ENCODE measurements at regions of chr17 and their contacts with region 1.

Region 1: DNA sequence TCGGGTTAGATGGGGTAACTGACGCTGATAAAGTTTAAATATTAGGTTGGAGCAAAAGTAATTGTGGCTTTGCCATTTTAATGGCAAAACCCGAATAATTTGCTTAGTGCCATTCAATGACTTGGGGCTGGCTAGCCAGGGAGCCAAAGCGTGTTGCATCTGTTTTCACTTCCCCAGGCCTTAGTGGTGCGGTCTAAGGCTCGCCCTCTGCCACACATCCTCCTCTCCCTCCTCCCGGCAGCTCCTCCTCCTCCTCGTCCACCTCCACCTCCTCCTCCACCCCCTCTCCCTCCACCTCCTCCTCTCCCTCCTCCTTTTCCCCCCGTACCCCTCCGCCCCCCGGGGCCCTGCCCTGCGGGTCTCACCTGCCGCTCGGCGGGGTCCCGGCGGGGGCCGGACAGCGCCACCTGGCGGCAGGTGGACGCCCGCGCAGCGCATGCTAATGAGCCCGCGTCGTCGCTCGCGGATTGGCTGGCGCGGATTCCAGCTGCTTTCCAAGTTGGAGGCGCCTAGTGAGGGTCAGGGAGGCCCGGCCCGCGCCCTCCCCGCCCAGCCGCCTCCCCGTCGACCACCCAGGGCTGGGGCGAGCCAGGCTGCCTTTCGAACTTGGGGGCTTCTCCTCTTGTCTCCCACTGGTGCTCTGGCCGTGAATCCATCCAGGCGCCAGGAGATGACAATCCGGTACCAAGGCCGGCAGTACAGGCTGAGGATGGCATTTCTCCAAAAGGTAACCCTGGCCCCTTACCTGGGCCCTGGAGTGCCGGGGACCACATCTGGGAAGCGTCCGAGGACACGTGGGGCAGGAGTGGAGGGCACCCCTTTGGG is 36.6 kb upstream of the RGS9 start:
- DNase-seq: peak; percentile 21
- H3K4me3 ChIP-seq: peak overlapping the region; percentile 31 to 69 (median 52)
- H3K27ac ChIP-seq: peak overlapping the region; percentile 73 to 84 (median 80)
- H3K4me1 ChIP-seq: peaks cover 5 to 36% (median 14%) of the 10 kb centered on the region in 3 donors
- H3K27me3 ChIP-seq: no peaks in the 10 kb centered on the region
- CTCF ChIP-seq: peak; percentile 94 to 97 (median 96)
- POLR2A ChIP-seq: peak in 1 of 4 donors; percentile 30

Region 2: DNA sequence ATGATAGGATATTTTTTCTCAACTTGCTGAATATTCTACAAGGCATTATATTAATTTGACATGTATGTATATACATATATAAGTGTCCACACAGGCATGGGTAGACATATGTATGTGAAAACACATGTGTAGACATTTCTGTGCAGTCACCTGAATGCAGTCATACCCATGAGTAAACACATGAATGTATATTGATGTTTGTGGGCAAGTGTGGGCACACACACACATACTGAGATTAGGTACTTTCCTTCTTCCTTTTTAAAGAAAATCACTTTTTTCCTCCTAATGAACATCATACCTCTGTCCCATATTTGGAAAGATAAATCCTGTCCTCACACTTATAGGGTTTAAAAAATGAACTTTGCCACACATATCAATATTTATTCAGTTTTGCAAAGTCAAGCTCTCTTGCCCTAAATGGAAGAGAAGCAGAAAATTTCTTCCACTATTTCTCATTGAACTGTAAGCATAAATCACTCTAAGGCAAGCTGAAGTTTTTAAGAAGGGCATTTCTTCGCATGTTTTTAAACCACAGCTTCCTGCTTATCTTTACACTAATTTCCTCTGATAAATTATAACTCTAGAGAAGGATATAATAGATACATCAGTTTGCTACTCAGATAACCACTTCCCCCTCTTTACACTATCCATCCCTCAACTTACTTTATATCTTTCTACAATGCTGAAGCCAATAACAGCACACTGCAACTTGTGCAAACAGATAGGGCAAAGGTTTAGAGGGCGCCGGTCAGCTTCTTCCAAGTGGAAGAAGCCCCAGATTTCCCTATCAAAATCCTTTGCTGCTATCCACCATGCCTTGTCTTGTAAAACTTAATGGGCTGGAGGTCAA is 131.7 kb before region 1 on chr17:
- intact Hi-C with region 1: loop called (anchors 10 kb)
- DNase-seq: no peak
- H3K4me3 ChIP-seq: no peak overlapping the region
- H3K27ac ChIP-seq: peak overlapping the region in 3 of 4 donors; percentile 25 to 48 (median 43)
- H3K4me1 ChIP-seq: peaks cover 3 to 40% (median 8%) of the 10 kb centered on the region in 3 donors
- H3K27me3 ChIP-seq: no peaks in the 10 kb centered on the region
- CTCF ChIP-seq: no peak
- POLR2A ChIP-seq: no peak

Region 3: DNA sequence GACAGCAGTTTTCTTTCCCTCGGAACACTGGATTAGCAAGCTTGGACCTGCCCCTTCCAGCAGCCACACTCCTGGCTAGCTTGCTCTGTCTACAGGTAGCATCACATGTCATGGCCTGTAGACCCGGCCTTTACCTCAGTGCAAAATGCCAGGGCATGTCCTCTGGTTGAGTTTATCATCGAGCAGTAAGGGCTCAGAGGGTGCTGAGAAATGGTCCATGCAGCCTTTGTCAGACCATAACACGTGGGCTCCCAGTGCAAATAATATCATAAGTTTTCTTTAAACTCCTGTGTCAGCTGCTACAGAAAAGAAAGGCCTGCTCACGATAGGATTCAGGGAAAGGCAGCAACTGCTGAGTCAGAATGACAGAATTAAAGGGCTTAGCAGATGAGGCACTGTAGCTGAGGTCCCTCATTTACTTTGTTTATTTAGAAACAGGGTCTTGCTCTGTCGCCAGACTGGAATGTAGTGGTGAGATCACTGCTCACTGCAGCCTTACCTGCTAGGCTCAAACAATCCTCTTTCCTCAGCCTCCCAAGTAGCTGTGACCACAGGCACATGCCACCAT is 36.0 kb before region 1 on chr17:
- intact Hi-C with region 1: loop called (anchors 5 kb)
- DNase-seq: no peak
- H3K4me3 ChIP-seq: no peak overlapping the region
- H3K27ac ChIP-seq: peak overlapping the region; percentile 46 to 89 (median 78)
- H3K4me1 ChIP-seq: peaks cover 22 to 80% (median 43%) of the 10 kb centered on the region in 3 donors
- H3K27me3 ChIP-seq: no peaks in the 10 kb centered on the region
- CTCF ChIP-seq: no peak
- POLR2A ChIP-seq: no peak